ENCODE measurements at regions of chr19 and their contacts with region 1.

Region 1: GRCh38 chr19:39846176-39846677 is at the start of gene FBL:
- DNase-seq: peak; percentile 99
- ATAC-seq: peak; percentile 88
- H3K4me3 Mint-ChIP-seq: peak within 1 kb of the TSS; percentile 96
- H3K27ac Mint-ChIP-seq: peak within 1 kb of the TSS; percentile 94
- H3K4me1 Mint-ChIP-seq: peaks cover 48% of the 10 kb centered on the region
- H3K27me3 Mint-ChIP-seq: no peaks in the 10 kb centered on the region
- total RNA-seq, gene FBL: 742 to 890 TPM

Region 2: GRCh38 chr19:39679056-39679790 is 167.0 kb before region 1 on chr19:
- CTCF ChIA-PET with region 1: interaction called, 6 read pairs
- POLR2A ChIA-PET with region 1: interaction called, 4 read pairs
- intact Hi-C with region 1: loop called in 1 of 2 experiments (anchors 2 kb)
- DNase-seq: peak; percentile 76
- ATAC-seq: peak; percentile 81
- H3K4me3 Mint-ChIP-seq: peak overlapping the region; percentile 63
- H3K27ac Mint-ChIP-seq: peak overlapping the region; percentile 79
- H3K4me1 Mint-ChIP-seq: peaks cover 44% of the 10 kb centered on the region
- H3K27me3 Mint-ChIP-seq: peaks cover 2% of the 10 kb centered on the region

Region 3: GRCh38 chr19:39792999-39793546 is 53.2 kb before region 1 on chr19:
- CTCF ChIA-PET with region 1: interaction called, 77 read pairs
- POLR2A ChIA-PET with region 1: no interaction called
- intact Hi-C with region 1: loop called (anchors 1 kb)
- DNase-seq: peak; percentile 87
- ATAC-seq: peak; percentile 97
- H3K4me3 Mint-ChIP-seq: peak overlapping the region; percentile 68
- H3K27ac Mint-ChIP-seq: no peak overlapping the region
- H3K4me1 Mint-ChIP-seq: no peaks in the 10 kb centered on the region
- H3K27me3 Mint-ChIP-seq: peaks cover 5% of the 10 kb centered on the region

Region 4: DNA sequence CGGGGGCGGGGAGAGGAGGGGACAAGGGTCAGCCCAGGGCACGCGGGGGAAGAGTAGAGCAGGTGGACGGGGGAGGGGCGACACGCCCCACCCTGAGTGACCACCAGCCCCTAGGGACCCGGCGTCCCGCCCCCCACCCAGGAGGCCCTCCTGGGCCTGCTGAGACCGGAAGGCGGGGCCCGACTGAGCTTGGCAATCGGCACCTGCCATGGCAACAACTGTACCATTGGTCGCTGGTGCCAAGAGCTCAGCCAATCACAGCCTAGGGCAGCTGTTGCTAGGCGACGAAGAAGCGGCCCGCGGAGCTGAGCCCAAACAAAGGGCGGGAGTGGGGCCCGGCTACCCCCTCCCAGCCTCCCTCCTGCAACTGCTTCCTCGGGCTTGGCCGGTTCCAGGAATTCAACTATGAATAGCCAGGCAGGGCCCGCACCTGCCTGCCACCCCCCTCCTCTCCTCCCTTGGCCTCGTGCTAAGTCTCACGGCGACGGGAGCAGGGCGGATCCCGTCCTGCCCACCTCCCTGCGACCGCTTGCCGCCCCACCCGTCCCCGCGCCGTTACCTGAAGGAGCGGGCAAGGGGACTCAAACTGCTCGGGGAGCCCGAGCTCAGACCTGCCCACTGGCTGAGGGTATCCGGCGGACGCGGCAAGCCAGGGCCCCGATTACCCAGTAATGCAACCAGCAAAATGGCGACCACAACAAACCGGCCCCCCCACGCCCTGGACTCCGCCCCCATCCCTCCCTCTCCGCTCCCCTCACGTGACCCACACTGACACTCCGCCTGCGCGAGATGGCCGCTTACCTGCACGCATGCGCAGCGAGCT is 12.6 kb before region 1 on chr19 and contains the start of gene DYRK1B:
- CTCF ChIA-PET with region 1: interaction called, 38 read pairs
- POLR2A ChIA-PET with region 1: interaction called, 32 read pairs
- intact Hi-C with region 1: loop called in 1 of 2 experiments (anchors 1 kb)
- DNase-seq: peak; percentile 99
- ATAC-seq: peak; percentile 92
- H3K4me3 Mint-ChIP-seq: peak within 1 kb of the TSS; percentile 64
- H3K27ac Mint-ChIP-seq: peak within 1 kb of the TSS; percentile 84
- H3K4me1 Mint-ChIP-seq: peaks cover 25% of the 10 kb centered on the region
- H3K27me3 Mint-ChIP-seq: no peaks in the 10 kb centered on the region
- total RNA-seq, gene DYRK1B: 4.8 to 6.9 TPM

Measured in activated CD4-positive, alpha-beta T cell treated with anti-CD3 and anti-CD28 coated beads for 36 hours (primary cell).